ENCODE measurements at regions of chr20 and their contacts with region 1.

Region 1: DNA sequence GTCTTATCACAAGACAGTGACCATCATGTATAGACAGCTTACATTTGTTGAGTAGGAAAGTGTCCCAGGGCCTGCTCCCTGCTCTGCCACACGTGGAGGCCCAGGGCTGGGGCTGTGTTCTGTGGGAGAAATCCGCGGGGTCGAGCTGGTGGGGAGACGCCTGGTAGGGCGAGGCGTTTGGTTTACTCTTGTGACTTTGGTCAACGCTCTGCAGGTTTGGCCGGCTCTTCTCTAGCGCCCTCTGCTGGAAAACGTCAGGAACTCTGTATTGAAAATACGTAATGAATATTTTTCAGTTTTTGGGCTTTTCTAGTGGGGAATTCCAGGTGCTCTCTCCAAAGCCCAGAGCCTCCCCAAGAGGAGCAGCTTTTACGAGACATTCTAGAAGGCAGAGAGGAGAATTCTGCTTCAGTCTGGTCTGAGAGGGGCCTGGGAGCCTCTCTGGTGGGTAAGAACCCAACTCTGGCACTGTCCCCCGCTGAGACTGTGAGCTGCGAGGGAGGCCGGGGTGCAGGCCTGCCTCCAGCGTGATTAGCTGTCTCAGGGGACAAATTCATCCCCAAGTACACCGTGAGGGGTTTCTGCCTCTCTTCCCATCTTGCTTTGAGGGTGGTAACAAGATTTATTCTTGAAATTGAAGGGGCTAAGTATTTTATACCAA is 112.6 kb upstream of the RALGAPA2 start:
- DNase-seq: peak; percentile 64
- H3K4me3 ChIP-seq: no peak overlapping the region
- H3K27ac ChIP-seq: no peak overlapping the region
- H3K4me1 ChIP-seq: peaks cover 2% of the 10 kb centered on the region
- H3K27me3 ChIP-seq: peaks cover 0 to 14% of the 10 kb centered on the region in 2 experiments
- CTCF ChIP-seq: peak; percentile 71 to 78
- POLR2A ChIP-seq: no peak

Region 2: DNA sequence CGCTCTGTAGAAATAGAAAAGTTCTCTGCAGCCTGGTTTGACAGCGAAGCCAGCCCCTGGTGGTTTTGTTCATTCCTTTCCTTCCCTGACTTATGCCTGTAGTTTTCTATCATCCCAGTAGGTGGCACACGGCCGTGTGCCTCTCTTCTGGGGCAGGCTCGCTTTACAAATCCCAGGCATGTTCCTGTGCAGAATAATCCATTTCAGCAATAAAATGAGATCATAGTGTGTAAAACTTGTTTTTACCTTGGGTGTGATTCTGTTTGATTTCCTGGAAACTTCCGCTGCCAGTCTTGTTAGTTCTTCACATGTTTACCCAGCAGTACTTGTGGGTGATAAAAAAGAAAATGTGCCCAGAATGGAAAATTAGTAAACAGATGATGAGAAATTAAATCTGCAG is 464.6 kb before region 1 on chr20:
- CTCF ChIA-PET with region 1: no interaction called
- POLR2A ChIA-PET with region 1: no interaction called
- dilution Hi-C with region 1: no loop called
- intact Hi-C with region 1: loop called (anchors 10 kb)
- DNase-seq: peak; percentile 69
- H3K4me3 ChIP-seq: no peak overlapping the region
- H3K27ac ChIP-seq: no peak overlapping the region
- H3K4me1 ChIP-seq: no peaks in the 10 kb centered on the region
- H3K27me3 ChIP-seq: peaks cover 43 to 54% of the 10 kb centered on the region in 2 experiments
- CTCF ChIP-seq: peak; percentile 69 to 85
- POLR2A ChIP-seq: no peak

Region 3: DNA sequence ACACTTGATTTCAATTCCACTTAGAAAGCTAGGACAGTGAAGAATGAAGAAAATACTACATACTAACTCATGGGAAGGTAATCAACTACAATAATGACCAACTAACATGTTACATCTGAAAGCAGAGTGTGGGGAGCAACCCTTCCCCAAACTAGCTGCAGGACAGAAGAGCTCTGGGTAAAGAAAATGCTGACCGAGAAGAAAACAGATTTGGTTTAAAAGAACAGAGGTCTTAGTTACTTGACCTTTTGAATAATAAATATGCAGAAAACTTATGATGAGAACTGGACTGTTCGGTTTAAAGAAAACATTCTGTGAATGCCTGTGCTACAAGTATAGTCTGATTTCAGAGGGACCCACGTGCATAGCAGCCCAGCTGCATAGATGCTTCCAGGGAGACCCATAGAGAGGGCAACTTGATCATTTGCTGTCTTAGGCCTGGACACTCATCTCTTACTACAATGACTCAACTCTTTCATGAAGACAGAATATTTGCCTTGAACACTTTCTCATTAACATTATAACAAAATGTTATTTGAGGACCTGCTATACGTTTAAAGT is 166.1 kb before region 1 on chr20:
- CTCF ChIA-PET with region 1: interaction called, 48 read pairs
- POLR2A ChIA-PET with region 1: no interaction called
- dilution Hi-C with region 1: no loop called
- intact Hi-C with region 1: no loop called
- DNase-seq: no peak
- H3K4me3 ChIP-seq: no peak overlapping the region
- H3K27ac ChIP-seq: no peak overlapping the region
- H3K4me1 ChIP-seq: no peaks in the 10 kb centered on the region
- H3K27me3 ChIP-seq: no peaks in the 10 kb centered on the region
- CTCF ChIP-seq: no peak
- POLR2A ChIP-seq: no peak

Region 4: DNA sequence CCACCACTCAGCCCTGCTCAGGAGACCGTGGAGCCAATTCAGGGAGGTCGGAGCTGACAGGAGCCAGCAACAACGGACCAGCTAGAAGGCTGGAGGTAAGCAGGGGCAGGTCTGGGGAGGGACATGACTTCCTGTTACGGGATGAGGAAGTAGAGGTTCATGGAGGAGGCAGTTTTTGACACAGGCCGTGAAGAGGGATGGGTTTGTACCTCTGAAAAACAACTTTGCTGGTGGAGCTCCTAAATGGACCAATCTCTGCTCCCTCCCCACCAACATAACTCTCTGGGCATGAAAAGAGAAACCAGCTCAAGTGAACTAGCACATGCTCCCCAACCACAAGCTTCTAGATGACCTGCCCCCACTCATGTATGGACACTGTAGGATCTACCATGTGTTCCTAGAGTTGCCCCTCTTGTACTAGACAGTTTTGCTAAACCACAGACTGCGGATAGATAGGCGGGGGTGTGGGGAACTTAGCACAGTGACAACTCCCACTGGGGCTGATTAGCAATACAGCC is 144.0 kb before region 1 on chr20:
- CTCF ChIA-PET with region 1: interaction called, 16 read pairs
- POLR2A ChIA-PET with region 1: no interaction called
- dilution Hi-C with region 1: no loop called
- intact Hi-C with region 1: no loop called
- DNase-seq: no peak
- H3K4me3 ChIP-seq: no peak overlapping the region
- H3K27ac ChIP-seq: no peak overlapping the region
- H3K4me1 ChIP-seq: no peaks in the 10 kb centered on the region
- H3K27me3 ChIP-seq: no peaks in the 10 kb centered on the region
- CTCF ChIP-seq: no peak
- POLR2A ChIP-seq: no peak

Region 5: GRCh38 chr20:20734475-20734948 is 90.5 kb before region 1 on chr20:
- CTCF ChIA-PET with region 1: interaction called, 9 read pairs
- POLR2A ChIA-PET with region 1: no interaction called
- dilution Hi-C with region 1: no loop called
- intact Hi-C with region 1: loop called (anchors 1 kb)
- DNase-seq: peak; percentile 92
- H3K4me3 ChIP-seq: no peak overlapping the region
- H3K27ac ChIP-seq: peak overlapping the region; percentile 99
- H3K4me1 ChIP-seq: peaks cover 50% of the 10 kb centered on the region
- H3K27me3 ChIP-seq: no peaks in the 10 kb centered on the region
- CTCF ChIP-seq: no peak
- POLR2A ChIP-seq: peak; percentile 60

Region 6: DNA sequence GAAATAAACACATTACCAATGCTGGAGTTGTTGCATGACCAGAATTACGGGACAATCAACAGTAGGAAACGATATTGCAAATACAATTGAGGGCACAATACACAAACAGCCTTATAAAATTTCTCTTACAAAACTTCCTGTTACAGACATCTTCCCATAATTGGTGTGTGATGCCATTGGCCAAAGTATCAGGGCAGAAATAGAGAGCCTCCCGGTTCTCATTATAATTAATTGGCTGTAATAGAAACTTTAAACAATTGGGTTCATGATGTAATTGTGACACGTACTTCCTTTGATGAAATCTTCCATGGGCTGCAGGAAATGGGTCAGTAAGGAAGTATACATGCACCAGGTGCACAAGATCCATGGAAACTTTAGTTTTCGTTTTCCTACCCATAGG is 72.3 kb before region 1 on chr20:
- CTCF ChIA-PET with region 1: interaction called, 4 read pairs
- POLR2A ChIA-PET with region 1: no interaction called
- dilution Hi-C with region 1: no loop called
- intact Hi-C with region 1: loop called (anchors 2 kb)
- DNase-seq: peak; percentile 89
- H3K4me3 ChIP-seq: no peak overlapping the region
- H3K27ac ChIP-seq: peak overlapping the region; percentile 62
- H3K4me1 ChIP-seq: peaks cover 18% of the 10 kb centered on the region
- H3K27me3 ChIP-seq: no peaks in the 10 kb centered on the region
- CTCF ChIP-seq: no peak
- POLR2A ChIP-seq: no peak

Region 7: DNA sequence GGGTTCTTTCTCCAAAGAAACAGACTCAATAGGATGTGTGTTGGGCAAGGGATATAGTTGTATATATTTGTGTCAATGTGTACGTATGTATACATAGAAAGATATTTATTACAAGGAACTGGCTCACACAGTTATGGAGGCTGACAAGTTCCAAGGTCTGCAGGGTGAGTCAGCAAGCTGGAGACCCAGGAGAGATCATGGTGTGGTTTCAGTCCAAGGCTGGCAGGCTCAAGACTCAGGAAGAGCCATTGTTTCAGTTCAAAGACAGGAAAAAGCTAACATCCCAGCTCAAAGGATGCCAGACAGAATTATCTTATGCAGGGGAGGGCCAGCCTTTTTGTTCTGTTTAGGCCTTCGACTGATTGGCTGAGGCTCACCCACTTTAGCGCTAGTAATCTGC is 22.7 kb before region 1 on chr20:
- CTCF ChIA-PET with region 1: interaction called, 6 read pairs
- POLR2A ChIA-PET with region 1: no interaction called
- dilution Hi-C with region 1: no loop called
- intact Hi-C with region 1: loop called (anchors 2 kb)
- DNase-seq: peak; percentile 86
- H3K4me3 ChIP-seq: no peak overlapping the region
- H3K27ac ChIP-seq: peak overlapping the region; percentile 27
- H3K4me1 ChIP-seq: peaks cover 16% of the 10 kb centered on the region
- H3K27me3 ChIP-seq: peaks cover 0 to 6% of the 10 kb centered on the region in 2 experiments
- CTCF ChIP-seq: no peak
- POLR2A ChIP-seq: no peak

Region 8: DNA sequence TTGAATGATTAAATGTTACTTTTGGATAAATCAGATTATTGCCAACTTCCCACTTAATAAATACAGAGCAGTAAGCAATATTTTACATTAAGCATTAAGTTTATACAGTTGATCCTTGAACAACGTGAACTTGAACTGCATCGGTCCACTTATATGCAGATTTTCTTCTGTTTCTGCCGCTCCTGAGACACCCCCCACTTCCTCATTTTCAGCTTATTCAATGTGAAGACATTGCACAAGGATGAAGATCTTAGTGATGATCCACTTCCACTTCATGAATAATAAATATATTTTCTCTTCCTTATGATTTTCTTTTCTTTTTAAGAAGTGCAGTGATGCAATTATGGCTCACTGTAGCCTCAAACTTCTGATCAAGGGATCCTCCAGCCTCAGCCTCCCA is 114.0 kb after region 1 on chr20:
- CTCF ChIA-PET with region 1: no interaction called
- POLR2A ChIA-PET with region 1: no interaction called
- dilution Hi-C with region 1: no loop called
- intact Hi-C with region 1: no loop called
- DNase-seq: no peak
- H3K4me3 ChIP-seq: no peak overlapping the region
- H3K27ac ChIP-seq: no peak overlapping the region
- H3K4me1 ChIP-seq: no peaks in the 10 kb centered on the region
- H3K27me3 ChIP-seq: no peaks in the 10 kb centered on the region
- CTCF ChIP-seq: no peak
- POLR2A ChIP-seq: no peak